Activated B cell treated with CpG ODN at 0.5 μM for 24 hours (primary cell): ENCODE measurements at regions of chr18 and their contacts with region 1.

Region 1: DNA sequence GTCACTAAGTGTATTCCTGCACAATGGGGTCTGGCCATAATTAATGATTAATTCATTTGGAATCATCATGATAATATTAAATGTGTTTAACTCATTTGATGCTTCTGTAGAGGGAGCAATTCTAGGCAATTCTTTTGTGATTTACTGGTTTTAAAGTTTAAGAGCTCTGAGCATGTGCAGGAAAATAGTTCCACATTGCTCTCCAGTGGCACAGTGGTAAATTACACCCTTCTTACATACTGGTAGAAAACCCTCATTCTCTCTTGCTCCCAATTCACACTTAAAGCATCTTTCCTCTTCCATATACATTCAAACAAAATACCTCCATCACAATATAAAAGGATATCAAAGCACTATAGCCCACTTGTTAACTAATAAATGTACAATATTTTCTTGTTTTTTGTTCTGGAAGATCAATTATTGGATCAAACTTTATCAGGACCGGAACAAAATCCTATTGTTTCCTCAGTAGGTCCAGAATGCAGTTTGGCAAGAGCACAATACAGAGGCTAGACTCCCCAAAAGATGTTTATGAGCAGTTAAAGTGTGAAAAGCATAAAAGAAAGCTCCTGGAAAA is 844.3 kb downstream of the MBD2 start:
- DNase-seq: no peak
- ATAC-seq: no peak
- H3K4me3 Mint-ChIP-seq: no peak overlapping the region
- H3K27ac Mint-ChIP-seq: no peak overlapping the region
- H3K4me1 Mint-ChIP-seq: no peaks in the 10 kb centered on the region
- H3K27me3 Mint-ChIP-seq: no peaks in the 10 kb centered on the region
- CTCF ChIP-seq: no peak

Region 2: DNA sequence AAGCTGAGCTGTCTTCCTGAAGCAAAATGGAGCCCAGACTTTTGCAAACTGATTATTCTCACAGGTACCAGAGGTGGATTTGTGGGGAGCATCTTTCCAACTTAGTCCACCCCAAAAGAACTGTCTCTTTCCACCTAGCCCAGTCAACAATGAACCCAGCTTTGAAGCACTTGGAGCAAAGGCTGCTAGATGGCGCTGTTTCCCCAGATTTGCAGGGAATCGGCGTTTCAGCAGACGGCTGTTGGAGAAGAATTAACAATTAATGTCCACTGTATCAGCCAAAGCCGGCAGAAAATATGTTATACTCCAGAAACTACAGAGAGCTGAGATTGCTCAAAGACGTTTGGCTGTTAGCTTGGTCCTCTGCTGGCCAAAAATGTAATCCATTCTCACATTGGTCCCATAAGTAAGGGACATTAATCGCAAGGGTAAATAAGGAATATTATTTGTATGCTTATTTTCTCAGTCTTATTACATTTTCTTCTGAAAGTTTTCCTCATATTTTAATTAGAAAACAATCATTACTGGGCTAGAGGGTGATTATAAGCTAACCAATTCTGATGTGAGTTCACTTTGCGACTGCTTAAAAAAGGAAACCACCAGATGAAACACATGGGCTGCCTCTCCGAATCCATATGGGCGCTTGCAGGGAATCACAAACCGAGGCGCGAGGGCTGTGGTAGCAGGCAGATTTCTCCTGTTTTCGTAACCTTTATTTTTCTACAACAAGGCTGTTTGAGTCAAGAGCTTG is 1758.9 kb before region 1 on chr18:
- CTCF ChIA-PET with region 1: no interaction called
- POLR2A ChIA-PET with region 1: no interaction called
- intact Hi-C with region 1: loop called (anchors 5 kb)
- DNase-seq: no peak
- ATAC-seq: no peak
- H3K4me3 Mint-ChIP-seq: no peak overlapping the region
- H3K27ac Mint-ChIP-seq: no peak overlapping the region
- H3K4me1 Mint-ChIP-seq: no peaks in the 10 kb centered on the region
- H3K27me3 Mint-ChIP-seq: peaks cover 18% of the 10 kb centered on the region
- CTCF ChIP-seq: no peak

Region 3: GRCh38 chr18:51668101-51668500 is 1712.0 kb before region 1 on chr18:
- CTCF ChIA-PET with region 1: no interaction called
- POLR2A ChIA-PET with region 1: no interaction called
- intact Hi-C with region 1: loop called (anchors 2 kb)
- DNase-seq: no peak
- ATAC-seq: peak; percentile 28
- H3K4me3 Mint-ChIP-seq: no peak overlapping the region
- H3K27ac Mint-ChIP-seq: no peak overlapping the region
- H3K4me1 Mint-ChIP-seq: peaks cover 4% of the 10 kb centered on the region
- H3K27me3 Mint-ChIP-seq: peaks cover 18% of the 10 kb centered on the region
- CTCF ChIP-seq: no peak

Region 4: DNA sequence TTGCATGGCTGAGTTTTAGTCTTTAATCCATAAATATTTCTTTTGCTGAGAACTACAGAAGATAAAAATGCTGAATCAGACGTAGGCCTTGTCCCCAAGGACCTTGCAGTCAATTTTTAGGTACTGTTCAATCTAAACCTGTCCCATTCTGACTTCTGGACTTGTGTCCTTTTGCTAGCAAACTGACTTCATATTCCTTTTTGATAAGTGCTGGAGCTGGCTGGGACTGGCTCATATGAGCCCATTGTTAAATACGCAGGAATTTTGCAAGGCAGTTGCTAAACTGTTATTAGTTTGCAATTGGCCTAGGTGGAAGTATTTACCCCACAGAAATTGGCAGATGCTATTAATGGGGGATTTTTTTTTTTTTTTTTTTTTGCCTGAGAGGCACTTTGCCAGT is 98.7 kb before region 1 on chr18:
- CTCF ChIA-PET with region 1: no interaction called
- POLR2A ChIA-PET with region 1: no interaction called
- intact Hi-C with region 1: no loop called
- DNase-seq: no peak
- ATAC-seq: no peak
- H3K4me3 Mint-ChIP-seq: no peak overlapping the region
- H3K27ac Mint-ChIP-seq: no peak overlapping the region
- H3K4me1 Mint-ChIP-seq: no peaks in the 10 kb centered on the region
- H3K27me3 Mint-ChIP-seq: no peaks in the 10 kb centered on the region
- CTCF ChIP-seq: no peak